HCT116 (cell line): ENCODE measurements at regions of chr9 and their contacts with region 1.

Region 1: GRCh38 chr9:22342491-22343217 is 104.0 kb upstream of the DMRTA1 start:
- DNase-seq: no peak
- ATAC-seq: no peak
- H3K4me3 ChIP-seq: no peak overlapping the region
- H3K27ac ChIP-seq: no peak overlapping the region
- H3K4me1 ChIP-seq: 0 out of 4 replicates have a peak, but pooled peaks cover 0 to 4% of the 10 kb centered on the region in 2 experiments
- H3K27me3 ChIP-seq: no peaks in the 10 kb centered on the region
- CTCF ChIP-seq: no peak
- POLR2A ChIP-seq: no peak
- RAD21 ChIP-seq: no peak

Region 2: DNA sequence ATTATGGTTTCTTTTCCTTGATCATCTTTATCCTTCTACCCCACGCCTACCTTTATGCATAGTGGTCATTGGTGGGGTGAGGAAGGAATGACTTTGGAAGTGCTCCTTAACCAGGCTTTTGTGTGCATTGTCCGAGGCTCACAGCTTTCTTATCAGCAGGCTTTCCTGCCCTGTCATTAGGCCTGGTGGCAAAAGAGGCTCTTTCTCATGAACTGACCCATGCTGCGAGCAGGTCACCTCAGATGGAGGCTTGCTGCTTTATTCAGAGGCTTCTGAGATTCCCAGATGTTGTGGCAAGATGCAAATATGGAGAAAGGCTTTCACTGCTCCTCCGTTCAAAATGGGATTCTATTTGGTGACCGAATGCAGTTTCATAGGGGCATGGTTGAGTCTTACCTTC is 46.6 kb after region 1 on chr9:
- CTCF ChIA-PET with region 1: no interaction called
- POLR2A ChIA-PET with region 1: no interaction called
- RAD21 ChIA-PET with region 1: no interaction called
- intact Hi-C with region 1: loop called (anchors 5 kb)
- DNase-seq: no peak
- ATAC-seq: no peak
- H3K4me3 ChIP-seq: no peak overlapping the region
- H3K27ac ChIP-seq: no peak overlapping the region
- H3K4me1 ChIP-seq: no peaks in the 10 kb centered on the region
- H3K27me3 ChIP-seq: peaks cover 8% of the 10 kb centered on the region
- CTCF ChIP-seq: no peak
- POLR2A ChIP-seq: no peak
- RAD21 ChIP-seq: no peak